A673 (cell line): ENCODE measurements at regions of chr17 and their contacts with region 1.

Region 1: GRCh38 chr17:13457783-13458182 is 143.9 kb downstream of the HS3ST3A1 start:
- DNase-seq: no peak
- H3K4me3 ChIP-seq: no peak overlapping the region
- H3K27ac ChIP-seq: no peak overlapping the region
- H3K4me1 ChIP-seq: no peaks in the 10 kb centered on the region
- H3K27me3 ChIP-seq: no peaks in the 10 kb centered on the region
- CTCF ChIP-seq: no peak

Region 2: DNA sequence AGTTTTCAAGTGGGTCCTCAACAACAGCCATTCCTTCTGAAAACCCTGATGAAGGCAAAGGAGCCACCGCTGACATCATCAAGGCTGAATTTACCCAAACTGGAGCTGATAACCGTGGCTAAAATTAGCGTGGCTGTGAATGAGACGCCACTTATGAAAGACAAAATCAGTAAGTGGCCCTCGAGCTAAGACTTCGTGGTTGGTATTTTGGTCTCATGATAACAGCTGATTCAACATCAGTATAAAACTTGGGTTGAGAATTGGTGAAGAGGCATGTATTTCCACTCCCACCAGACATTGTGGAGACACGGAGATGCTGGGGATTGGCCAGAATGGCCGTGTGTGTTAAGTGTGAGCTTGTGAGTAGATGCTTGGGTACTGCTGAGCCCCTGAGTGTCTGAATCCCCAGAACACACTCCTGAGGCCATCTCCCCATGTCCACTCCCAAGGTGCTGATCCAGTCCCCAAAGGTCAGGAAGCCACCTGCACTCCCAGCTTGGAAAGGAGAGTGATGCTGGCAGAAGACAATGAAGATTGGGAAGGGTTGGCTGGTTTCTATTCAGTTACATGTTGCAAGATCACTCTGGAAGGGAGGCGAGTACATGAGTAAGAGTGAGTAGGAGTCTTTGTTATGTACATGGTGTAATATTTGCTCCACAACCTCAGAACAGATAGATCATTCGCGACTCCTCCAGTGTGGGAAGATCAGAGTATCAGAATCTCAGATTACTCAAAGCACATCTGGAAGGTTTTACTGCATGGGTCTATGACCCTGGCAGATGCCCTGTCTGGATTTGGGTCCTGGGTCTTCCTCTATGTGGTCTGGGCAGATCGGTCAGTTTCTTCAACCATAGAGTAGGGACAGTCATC is 63.7 kb before region 1 on chr17:
- CTCF ChIA-PET with region 1: no interaction called
- POLR2A ChIA-PET with region 1: no interaction called
- intact Hi-C with region 1: loop called (anchors 10 kb)
- DNase-seq: no peak
- H3K4me3 ChIP-seq: no peak overlapping the region
- H3K27ac ChIP-seq: no peak overlapping the region
- H3K4me1 ChIP-seq: no peaks in the 10 kb centered on the region
- H3K27me3 ChIP-seq: no peaks in the 10 kb centered on the region
- CTCF ChIP-seq: no peak

Region 3: DNA sequence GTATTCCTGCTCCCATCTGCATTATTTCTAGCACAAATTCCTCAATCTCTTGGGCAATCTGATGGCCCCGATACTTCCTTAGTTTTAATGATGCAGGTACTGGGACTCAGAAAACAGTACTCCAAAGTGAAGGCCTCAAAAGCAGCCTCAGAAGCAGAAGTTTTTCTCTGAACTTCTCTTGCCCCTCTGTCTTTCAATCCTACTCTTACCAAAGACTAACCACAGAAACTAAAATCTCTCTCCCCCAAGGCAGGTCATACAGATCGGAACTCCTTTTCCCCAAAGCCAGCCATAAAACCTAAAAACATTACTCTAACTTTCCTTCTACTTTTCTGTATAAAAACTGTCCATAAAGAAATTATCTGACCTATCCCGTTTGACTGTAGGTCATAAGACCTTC is 40.4 kb after region 1 on chr17:
- CTCF ChIA-PET with region 1: no interaction called
- POLR2A ChIA-PET with region 1: no interaction called
- intact Hi-C with region 1: no loop called
- DNase-seq: no peak
- H3K4me3 ChIP-seq: no peak overlapping the region
- H3K27ac ChIP-seq: no peak overlapping the region
- H3K4me1 ChIP-seq: no peaks in the 10 kb centered on the region
- H3K27me3 ChIP-seq: no peaks in the 10 kb centered on the region
- CTCF ChIP-seq: no peak

Region 4: DNA sequence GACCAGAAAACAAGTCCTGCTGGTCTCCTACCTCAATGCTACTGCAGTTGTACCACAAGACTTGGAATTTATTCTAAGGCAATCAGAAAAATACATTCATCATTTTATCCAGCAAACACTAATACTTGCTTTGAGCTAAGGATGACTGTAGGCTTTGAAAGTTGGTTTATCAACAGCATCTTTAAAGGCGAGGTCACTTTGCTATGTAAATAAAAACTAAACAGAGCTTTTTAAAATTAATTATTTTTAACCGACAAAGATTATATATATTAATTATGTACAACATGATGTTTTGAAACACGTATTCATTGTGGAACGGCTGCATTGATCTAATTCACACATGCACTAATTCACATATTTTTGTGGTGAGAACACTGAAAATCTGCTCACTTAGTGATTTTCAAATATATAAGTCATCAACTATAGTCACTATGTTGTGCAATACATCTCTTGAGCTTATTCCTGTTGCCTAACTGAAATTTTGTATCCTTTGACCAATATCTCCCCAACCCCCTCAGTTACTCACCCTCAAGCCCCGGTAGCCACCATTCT is 269.8 kb after region 1 on chr17:
- CTCF ChIA-PET with region 1: no interaction called
- POLR2A ChIA-PET with region 1: no interaction called
- intact Hi-C with region 1: no loop called
- DNase-seq: no peak
- H3K4me3 ChIP-seq: no peak overlapping the region
- H3K27ac ChIP-seq: no peak overlapping the region
- H3K4me1 ChIP-seq: no peaks in the 10 kb centered on the region
- H3K27me3 ChIP-seq: no peaks in the 10 kb centered on the region
- CTCF ChIP-seq: no peak